ENCODE measurements at regions of chr1 and their contacts with region 1.

Region 1: DNA sequence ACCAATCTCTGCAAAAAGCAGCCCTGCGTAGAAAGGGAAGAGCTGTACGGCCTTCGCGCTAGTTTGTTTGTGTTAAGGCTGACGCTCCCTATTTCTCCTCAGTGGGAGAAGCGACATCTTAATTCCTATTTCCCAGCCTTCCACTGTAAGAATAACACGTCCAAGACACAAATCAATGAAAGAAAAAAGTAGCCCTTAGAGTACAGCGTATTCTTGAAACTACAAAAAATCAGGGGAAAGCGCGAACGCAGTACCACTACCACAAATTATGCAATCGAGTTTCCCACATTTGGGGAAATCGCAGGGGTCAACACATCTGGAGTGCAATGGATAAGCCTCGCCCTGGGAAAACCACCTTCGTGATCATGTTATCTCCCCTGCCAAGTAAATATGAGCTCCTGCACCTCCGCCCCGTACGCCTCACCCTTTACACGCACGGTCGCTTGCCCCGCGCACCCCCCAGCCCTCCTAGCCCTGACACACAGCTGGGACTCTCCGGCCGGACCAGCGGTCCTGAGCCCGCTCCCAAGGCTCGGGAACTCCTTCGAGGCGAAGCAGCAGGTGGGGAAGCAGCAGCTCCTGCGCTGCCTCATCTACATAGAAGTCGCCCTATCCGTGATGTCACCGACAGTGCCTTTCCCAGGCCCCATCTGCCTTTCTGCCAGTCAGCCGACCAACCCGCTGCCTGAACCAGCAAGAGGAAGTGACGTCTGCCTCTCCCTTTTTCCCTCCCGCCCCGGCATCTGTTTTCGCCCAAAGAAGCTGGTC is 94.7 kb downstream of the PPIAL4G start:
- DNase-seq: peak; percentile 70
- ATAC-seq: peak; percentile 76
- H3K4me3 Mint-ChIP-seq: peak overlapping the region; percentile 95
- H3K27ac Mint-ChIP-seq: peak overlapping the region; percentile 100
- H3K4me1 Mint-ChIP-seq: peaks cover 45% of the 10 kb centered on the region
- H3K27me3 Mint-ChIP-seq: no peaks in the 10 kb centered on the region
- CTCF ChIP-seq: no peak

Region 2: GRCh38 chr1:147109041-147109440 is 1279.4 kb before region 1 on chr1:
- CTCF ChIA-PET with region 1: no interaction called
- POLR2A ChIA-PET with region 1: no interaction called
- intact Hi-C with region 1: no loop called
- DNase-seq: no peak
- ATAC-seq: no peak
- H3K4me3 Mint-ChIP-seq: no peak overlapping the region
- H3K27ac Mint-ChIP-seq: no peak overlapping the region
- H3K4me1 Mint-ChIP-seq: no peaks in the 10 kb centered on the region
- H3K27me3 Mint-ChIP-seq: peaks cover 21% of the 10 kb centered on the region
- CTCF ChIP-seq: no peak

Region 3: DNA sequence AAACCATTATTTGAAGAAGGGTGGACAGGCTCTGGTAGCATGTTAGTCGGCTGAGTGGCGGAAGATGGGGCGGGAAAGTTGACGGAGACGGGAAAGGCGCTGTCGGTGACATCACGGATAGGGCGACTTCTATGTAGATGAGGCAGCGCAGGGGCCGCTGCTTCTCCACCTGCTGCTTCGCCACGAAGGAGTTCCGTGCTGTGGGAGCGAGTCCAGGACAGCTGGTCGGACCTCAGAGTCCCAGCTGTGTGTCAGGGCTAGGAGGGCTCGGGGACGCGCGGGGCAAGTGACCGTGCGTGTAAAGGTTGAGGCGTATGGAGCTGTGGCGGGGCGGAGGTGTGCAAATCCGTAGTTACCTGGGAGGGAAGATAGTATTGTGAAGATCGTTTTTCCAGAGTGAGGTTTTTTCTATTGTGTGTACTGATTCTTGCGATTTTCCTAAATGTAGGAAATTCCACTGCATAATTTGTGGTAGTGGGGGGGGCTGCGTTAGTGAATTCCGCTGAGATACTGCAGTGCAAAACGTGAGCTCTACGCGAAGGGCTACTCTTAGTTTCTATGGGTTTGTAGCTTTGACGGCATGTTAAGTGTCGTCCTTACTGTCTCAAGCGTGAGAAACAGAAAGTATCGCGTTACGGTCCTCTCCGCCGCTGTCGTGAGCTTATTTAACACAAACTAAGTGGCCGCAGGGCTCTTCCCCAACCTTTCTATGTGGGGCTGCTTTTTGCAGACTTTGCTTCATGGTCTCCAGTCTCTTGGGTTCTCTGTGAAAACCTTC is 125.1 kb before region 1 on chr1:
- CTCF ChIA-PET with region 1: no interaction called
- POLR2A ChIA-PET with region 1: interaction called, 32 read pairs
- intact Hi-C with region 1: no loop called
- DNase-seq: peak; percentile 58
- ATAC-seq: peak; percentile 89
- H3K4me3 Mint-ChIP-seq: peak overlapping the region; percentile 93
- H3K27ac Mint-ChIP-seq: peak overlapping the region; percentile 98
- H3K4me1 Mint-ChIP-seq: peaks cover 14% of the 10 kb centered on the region
- H3K27me3 Mint-ChIP-seq: no peaks in the 10 kb centered on the region
- CTCF ChIP-seq: no peak

Region 4: GRCh38 chr1:148372731-148373130 is 15.7 kb before region 1 on chr1:
- CTCF ChIA-PET with region 1: interaction called, 6 read pairs
- POLR2A ChIA-PET with region 1: interaction called, 18 read pairs
- intact Hi-C with region 1: no loop called
- DNase-seq: no peak
- ATAC-seq: no peak
- H3K4me3 Mint-ChIP-seq: no peak overlapping the region
- H3K27ac Mint-ChIP-seq: peak overlapping the region; percentile 28
- H3K4me1 Mint-ChIP-seq: peaks cover 24% of the 10 kb centered on the region
- H3K27me3 Mint-ChIP-seq: no peaks in the 10 kb centered on the region
- CTCF ChIP-seq: no peak